ENCODE measurements at regions of chr11 and their contacts with region 1.

Region 1: GRCh38 chr11:119095066-119095880 is 6.4 kb downstream of the DPAGT1 start:
- DNase-seq: peak; percentile 100
- ATAC-seq: peak; percentile 90
- H3K4me3 Mint-ChIP-seq: peak overlapping the region; percentile 93
- H3K27ac Mint-ChIP-seq: peak overlapping the region; percentile 94
- H3K4me1 Mint-ChIP-seq: peaks cover 50% of the 10 kb centered on the region
- H3K27me3 Mint-ChIP-seq: no peaks in the 10 kb centered on the region

Region 2: DNA sequence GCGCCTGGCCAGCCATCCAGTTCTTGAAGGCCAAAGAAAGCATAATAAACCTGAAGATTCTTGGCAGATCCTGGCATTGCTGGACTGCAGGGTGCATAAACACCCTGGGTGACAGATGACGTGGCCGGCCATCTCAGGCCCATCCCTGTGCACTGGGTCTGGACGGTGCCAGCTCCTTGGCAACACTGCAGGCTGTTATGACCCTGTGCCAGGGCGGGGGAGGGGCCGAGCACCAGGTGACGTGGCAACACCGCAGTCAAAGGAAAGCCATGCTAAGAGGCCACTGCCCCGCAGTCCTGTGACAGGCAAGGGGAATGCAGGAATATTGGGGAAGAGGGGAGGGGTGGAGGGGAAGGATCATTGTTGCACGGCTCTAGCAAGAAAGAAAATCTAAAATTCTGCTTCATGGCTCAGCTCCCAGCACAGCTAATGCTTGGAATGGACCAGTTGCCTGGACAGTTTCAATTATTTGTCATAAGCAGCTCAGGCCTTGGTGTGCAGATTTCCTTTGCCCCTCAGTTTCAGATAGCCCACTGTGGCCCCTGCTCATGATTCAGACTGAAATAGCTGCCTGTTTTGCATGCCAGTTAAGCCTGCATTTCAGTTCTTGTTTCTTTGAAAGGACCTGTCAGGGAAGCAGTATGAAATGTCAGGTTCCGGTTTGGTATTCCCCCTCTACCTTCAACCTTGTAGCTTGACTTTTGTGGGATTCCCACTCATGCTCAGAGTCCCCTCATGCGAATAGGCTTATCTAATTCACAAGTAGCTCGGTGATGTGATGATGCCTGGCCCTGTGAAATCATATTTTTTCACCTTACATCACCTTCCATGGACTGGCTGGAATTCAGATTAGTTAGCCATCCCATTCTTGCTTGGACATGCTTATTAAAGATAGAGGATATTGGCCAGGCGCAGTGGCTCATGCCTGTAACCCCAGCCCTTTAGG is 274.6 kb before region 1 on chr11:
- CTCF ChIA-PET with region 1: no interaction called
- POLR2A ChIA-PET with region 1: no interaction called
- intact Hi-C with region 1: no loop called
- DNase-seq: peak; percentile 16
- ATAC-seq: peak; percentile 89
- H3K4me3 Mint-ChIP-seq: no peak overlapping the region
- H3K27ac Mint-ChIP-seq: peak overlapping the region; percentile 43
- H3K4me1 Mint-ChIP-seq: peaks cover 15% of the 10 kb centered on the region
- H3K27me3 Mint-ChIP-seq: no peaks in the 10 kb centered on the region

Region 3: DNA sequence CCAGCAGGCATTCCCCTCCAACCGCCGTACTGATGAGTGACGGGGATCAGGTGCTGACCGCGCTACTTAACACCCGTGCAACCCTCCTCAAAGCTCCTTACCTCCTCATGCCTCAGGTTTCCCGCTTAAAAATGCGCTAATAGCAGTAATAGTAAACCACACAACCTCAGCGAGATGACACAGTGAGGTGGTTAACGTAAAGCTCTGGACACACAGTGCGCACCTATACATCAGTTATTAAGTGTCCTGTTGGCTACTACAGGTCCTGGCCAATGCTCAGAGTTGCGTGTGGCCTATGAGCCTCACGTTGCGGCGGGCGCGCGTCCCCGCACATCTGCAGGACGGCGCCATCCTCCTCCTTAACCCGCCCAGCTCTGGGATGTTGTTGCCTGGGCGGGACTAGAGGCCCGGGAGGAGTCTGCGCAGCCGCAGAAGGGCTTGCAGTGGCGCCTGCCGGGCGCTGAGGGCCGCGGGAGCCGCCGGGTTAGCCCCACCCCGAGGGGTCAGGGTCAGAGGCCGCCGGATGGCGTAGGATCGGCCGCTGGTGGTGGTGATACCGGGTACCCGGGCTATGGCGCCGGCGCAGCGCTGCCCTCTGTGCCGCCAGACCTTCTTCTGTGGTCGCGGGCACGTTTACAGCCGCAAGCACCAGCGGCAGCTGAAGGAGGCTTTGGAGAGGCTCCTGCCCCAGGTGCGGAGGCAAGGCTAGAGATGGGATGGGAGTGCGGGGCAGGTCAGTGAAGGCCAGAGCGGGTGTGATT is 97.5 kb before region 1 on chr11 and contains the start of gene CENATAC:
- CTCF ChIA-PET with region 1: interaction called, 3 read pairs
- POLR2A ChIA-PET with region 1: no interaction called
- intact Hi-C with region 1: loop called in 1 of 2 experiments (anchors 1 kb)
- DNase-seq: peak; percentile 98
- ATAC-seq: peak; percentile 93
- H3K4me3 Mint-ChIP-seq: peak within 1 kb of the TSS; percentile 88
- H3K27ac Mint-ChIP-seq: peak within 1 kb of the TSS; percentile 98
- H3K4me1 Mint-ChIP-seq: peaks cover 32% of the 10 kb centered on the region
- H3K27me3 Mint-ChIP-seq: no peaks in the 10 kb centered on the region
- total RNA-seq, gene CENATAC: 23.7 to 26.2 TPM

Region 4: GRCh38 chr11:119030329-119031049 is 64.8 kb before region 1 on chr11 and contains the start of gene SLC37A4:
- CTCF ChIA-PET with region 1: interaction called, 3 read pairs
- POLR2A ChIA-PET with region 1: interaction called, 3 read pairs
- intact Hi-C with region 1: loop called in 1 of 2 experiments (anchors 1 kb)
- DNase-seq: peak; percentile 99
- ATAC-seq: peak; percentile 94
- H3K4me3 Mint-ChIP-seq: peak within 1 kb of the TSS; percentile 76
- H3K27ac Mint-ChIP-seq: peak within 1 kb of the TSS; percentile 86
- H3K4me1 Mint-ChIP-seq: peaks cover 19% of the 10 kb centered on the region
- H3K27me3 Mint-ChIP-seq: no peaks in the 10 kb centered on the region
- total RNA-seq, gene SLC37A4: 26.2 to 36.2 TPM

Region 5: DNA sequence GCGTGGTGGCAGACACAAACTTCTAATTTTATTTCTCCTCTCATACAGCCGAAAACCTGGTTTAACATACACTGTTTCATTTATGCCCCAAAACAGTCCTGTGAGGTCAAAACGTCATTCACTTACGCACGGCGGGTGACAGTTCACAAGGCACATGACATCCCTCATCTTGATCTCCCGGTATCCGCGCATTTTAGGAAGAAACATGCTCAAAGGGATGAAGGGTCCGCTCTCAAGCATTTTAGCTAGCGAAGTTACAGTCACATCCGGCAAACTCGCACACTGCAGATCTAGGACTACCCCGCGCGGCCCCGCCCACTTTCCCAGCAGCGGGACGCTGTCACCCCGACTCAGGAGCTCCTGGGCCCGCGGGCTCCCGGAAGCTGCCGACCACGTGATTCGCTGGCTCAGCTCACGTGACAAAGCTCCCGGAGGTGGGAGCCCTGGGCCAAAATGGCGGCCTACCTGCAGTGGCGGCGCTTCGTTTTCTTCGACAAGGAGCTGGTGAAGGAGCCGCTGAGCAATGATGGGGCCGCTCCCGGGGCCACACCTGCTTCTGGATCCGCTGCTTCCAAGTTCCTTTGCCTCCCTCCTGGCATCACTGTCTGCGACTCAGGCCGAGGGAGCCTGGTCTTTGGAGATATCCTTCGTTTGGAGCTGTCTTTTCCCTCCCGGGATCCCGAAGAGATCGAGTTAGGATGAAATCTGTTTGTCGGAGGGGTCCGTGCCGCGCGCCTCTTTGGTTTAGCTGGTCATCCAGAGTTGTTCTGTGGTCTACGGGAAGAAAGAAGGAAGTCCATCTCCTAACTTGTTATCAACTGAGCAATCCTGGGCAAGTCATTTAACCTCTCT is 27.7 kb before region 1 on chr11 and contains the start of gene VPS11:
- CTCF ChIA-PET with region 1: interaction called, 20 read pairs
- POLR2A ChIA-PET with region 1: interaction called, 19 read pairs
- intact Hi-C with region 1: loop called (anchors 1 to 2 kb)
- DNase-seq: peak; percentile 100
- ATAC-seq: peak; percentile 98
- H3K4me3 Mint-ChIP-seq: peak within 1 kb of the TSS; percentile 87
- H3K27ac Mint-ChIP-seq: peak within 1 kb of the TSS; percentile 98
- H3K4me1 Mint-ChIP-seq: peaks cover 34% of the 10 kb centered on the region
- H3K27me3 Mint-ChIP-seq: no peaks in the 10 kb centered on the region
- total RNA-seq, gene VPS11: 20.5 to 25.4 TPM

Region 6: DNA sequence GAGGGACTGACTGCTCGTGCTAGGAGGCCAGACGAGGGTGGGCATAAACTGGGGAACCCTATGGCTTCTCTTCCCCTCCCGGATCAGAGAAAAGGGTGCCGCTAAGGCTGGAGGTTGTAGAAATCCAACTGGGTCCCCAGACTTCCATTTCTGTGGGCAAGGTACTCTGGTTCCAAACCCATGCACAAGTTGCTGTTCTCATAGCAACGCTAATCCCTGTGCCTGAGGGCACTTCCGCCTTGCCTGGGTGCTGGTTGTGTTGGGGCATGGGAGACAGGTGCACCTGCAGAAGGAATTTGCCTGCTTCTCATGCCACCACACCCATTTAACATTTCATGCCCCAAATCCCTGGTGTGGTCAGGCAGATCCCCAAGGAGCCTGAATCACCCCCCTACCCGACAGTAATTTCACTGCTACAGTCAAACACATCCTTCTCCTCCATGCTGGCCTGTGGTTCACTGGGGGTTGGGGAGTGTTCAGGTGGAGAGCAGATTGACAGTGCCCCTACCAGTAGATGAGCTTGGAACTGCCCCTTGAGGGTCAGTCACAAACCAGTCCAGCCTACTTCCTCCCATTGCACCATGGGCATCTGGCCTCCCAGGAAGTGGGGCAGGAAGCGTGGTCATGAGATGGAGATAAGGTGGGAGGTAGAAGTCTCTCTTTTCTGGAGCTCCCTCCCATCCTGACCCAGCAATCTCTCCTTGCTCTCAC is 13.0 kb after region 1 on chr11:
- CTCF ChIA-PET with region 1: interaction called, 11 read pairs
- POLR2A ChIA-PET with region 1: interaction called, 26 read pairs
- intact Hi-C with region 1: loop called in 1 of 2 experiments (anchors 1 kb)
- DNase-seq: peak; percentile 59
- ATAC-seq: peak; percentile 40
- H3K4me3 Mint-ChIP-seq: peak overlapping the region; percentile 89
- H3K27ac Mint-ChIP-seq: peak overlapping the region; percentile 89
- H3K4me1 Mint-ChIP-seq: peaks cover 39% of the 10 kb centered on the region
- H3K27me3 Mint-ChIP-seq: no peaks in the 10 kb centered on the region

Region 7: DNA sequence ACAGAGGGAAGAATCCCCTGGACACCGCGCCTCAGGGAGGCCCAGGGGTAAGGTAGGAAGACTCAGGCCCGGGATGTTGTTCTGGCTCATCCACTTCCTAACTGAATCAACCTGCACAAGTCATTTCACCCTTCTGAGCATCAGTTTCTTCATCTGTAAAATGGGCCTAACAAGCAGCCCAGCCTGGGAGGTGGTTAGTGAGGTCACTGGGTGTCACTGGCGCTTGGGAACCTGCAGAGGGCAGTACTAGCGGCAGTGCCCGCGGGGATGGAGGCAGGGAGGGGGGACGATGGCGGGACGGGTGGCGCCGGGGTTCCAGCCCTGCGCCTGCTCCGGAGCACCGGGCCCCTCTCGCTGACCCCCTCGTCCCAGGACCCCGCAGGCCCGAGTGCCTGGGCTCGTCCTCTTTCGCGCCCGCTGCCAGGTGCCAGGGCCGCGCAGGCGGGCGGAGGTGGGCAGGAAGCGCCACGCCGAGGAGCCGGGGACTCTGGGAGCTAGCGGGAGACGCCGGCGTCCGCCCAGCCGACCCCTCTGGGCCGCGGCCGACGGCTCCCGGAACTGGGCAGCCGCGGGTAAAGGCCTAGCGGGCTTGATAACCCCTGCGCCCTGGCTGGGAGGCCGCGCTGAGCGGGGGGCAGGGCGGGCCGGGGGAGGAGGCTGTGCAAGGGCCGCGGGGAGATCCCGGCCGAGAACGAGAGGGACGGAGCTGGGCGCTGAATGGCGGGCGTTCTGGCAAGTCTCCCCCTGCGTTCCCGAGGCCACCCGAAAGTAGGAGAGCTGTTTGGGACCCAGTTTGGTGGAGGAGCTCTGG is 73.4 kb after region 1 on chr11 and contains the start of gene NLRX1:
- CTCF ChIA-PET with region 1: no interaction called
- POLR2A ChIA-PET with region 1: no interaction called
- intact Hi-C with region 1: loop called in 1 of 2 experiments (anchors 2 kb)
- DNase-seq: peak; percentile 93
- ATAC-seq: peak; percentile 94
- H3K4me3 Mint-ChIP-seq: peak within 1 kb of the TSS; percentile 88
- H3K27ac Mint-ChIP-seq: peak within 1 kb of the TSS; percentile 90
- H3K4me1 Mint-ChIP-seq: peaks cover 11% of the 10 kb centered on the region
- H3K27me3 Mint-ChIP-seq: no peaks in the 10 kb centered on the region
- total RNA-seq, gene NLRX1: 18.2 to 25.0 TPM

Region 8: DNA sequence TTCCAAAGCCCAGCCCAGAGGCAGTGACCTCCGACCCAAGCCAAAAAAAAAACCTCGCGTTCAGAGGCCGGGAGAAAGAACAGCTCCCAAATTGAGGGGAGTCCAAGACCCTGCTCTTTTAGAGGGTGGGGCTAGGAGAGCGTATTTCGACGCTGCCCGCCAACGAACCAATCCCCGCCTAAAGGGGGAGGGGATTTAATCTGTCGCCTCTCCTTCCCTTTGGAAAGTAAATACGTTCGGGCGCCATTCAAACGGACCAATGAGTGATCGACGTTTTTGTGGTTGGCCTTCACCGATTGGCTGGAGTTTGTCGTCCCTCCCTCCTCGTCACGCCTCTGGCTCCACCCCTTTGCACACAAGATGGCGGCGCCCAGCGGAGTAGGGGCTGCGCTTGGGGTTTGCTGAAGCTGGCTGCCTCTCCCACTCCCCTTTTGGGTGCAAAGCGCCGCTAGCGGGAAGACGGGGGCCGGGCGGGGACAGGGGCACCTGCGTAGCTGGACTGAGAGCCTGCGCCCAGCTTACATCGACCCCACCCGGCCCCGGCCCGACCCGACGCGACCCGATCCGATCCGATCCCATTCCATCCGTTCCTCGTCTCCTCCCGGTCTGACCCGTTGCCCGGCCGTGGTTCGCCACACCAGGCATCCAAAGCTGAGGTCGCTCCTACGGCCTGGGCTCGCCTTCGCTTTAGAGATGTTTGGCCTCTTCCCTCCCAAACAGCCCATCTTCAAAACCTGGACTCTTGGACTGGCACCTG is 239.1 kb after region 1 on chr11 and contains the start of gene RNF26:
- CTCF ChIA-PET with region 1: interaction called, 4 read pairs
- POLR2A ChIA-PET with region 1: interaction called, 4 read pairs
- intact Hi-C with region 1: loop called in 1 of 2 experiments (anchors 1 kb)
- DNase-seq: peak; percentile 96
- ATAC-seq: peak; percentile 96
- H3K4me3 Mint-ChIP-seq: peak within 1 kb of the TSS; percentile 99
- H3K27ac Mint-ChIP-seq: peak within 1 kb of the TSS; percentile 99
- H3K4me1 Mint-ChIP-seq: peaks cover 29% of the 10 kb centered on the region
- H3K27me3 Mint-ChIP-seq: peaks cover 7% of the 10 kb centered on the region
- total RNA-seq, gene RNF26: 29.9 TPM